Activated CD4-positive, alpha-beta memory T cell treated with anti-CD3 and anti-CD28 coated beads for 36 hours (primary cell): ENCODE measurements at regions of chr1 and their contacts with region 1.

Region 1: DNA sequence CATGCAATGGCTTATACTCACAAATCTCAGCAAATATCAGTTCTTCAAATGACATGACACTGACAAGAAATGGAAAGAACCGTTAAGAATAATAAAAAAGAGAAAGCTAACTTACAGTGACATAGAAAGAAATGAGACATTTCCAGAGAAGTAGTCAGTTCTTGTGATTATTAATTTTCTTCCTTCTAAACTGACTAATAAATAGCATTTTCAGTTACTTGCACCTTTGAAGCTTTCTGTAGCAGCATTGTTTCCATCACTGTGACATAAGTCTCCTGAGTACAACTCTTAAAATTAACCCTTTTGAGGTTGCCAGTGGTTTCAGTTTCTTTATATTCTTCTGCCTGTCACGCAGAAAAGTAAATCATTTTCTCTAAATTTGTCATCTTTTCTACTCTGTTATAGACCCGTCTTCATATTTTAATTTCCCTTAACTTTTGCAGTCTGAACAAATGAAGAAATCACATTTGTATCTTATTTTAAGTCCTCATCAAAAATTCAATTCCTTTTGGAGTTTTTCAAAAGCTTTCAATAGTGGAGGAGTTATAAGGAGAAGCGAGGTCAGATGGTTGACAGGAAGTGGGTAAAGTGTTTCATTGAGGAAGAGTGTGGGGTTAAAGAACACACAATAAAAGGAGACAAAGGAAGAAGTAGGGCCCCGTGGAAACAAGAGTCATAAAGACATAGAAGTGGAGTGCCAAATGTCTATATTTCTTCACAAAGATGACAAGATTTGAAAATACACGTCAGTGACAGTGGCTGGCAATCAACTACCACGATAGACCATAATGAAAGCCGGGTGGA is 57.9 kb upstream of the S1PR1 start:
- DNase-seq: peak; percentile 58
- H3K4me3 Mint-ChIP-seq: peak overlapping the region; percentile 71
- H3K27ac Mint-ChIP-seq: peak overlapping the region; percentile 100
- H3K4me1 Mint-ChIP-seq: peaks cover 79% of the 10 kb centered on the region
- H3K27me3 Mint-ChIP-seq: no peaks in the 10 kb centered on the region

Region 2: GRCh38 chr1:100895540-100896483 is 283.1 kb before region 1 on chr1 and contains the start of gene SLC30A7:
- CTCF ChIA-PET with region 1: no interaction called
- POLR2A ChIA-PET with region 1: no interaction called
- intact Hi-C with region 1: loop called (anchors 1 kb)
- DNase-seq: peak; percentile 98
- H3K4me3 Mint-ChIP-seq: peak within 1 kb of the TSS; percentile 99
- H3K27ac Mint-ChIP-seq: peak within 1 kb of the TSS; percentile 100
- H3K4me1 Mint-ChIP-seq: peaks cover 40% of the 10 kb centered on the region
- H3K27me3 Mint-ChIP-seq: no peaks in the 10 kb centered on the region
- total RNA-seq, gene SLC30A7: 40.0 to 43.4 TPM

Region 3: GRCh38 chr1:100941098-100941527 is 237.8 kb before region 1 on chr1:
- CTCF ChIA-PET with region 1: no interaction called
- POLR2A ChIA-PET with region 1: no interaction called
- intact Hi-C with region 1: loop called (anchors 5 kb)
- DNase-seq: peak; percentile 67
- H3K4me3 Mint-ChIP-seq: peak overlapping the region; percentile 77
- H3K27ac Mint-ChIP-seq: peak overlapping the region; percentile 92
- H3K4me1 Mint-ChIP-seq: peaks cover 39% of the 10 kb centered on the region
- H3K27me3 Mint-ChIP-seq: peaks cover 3% of the 10 kb centered on the region

Region 4: DNA sequence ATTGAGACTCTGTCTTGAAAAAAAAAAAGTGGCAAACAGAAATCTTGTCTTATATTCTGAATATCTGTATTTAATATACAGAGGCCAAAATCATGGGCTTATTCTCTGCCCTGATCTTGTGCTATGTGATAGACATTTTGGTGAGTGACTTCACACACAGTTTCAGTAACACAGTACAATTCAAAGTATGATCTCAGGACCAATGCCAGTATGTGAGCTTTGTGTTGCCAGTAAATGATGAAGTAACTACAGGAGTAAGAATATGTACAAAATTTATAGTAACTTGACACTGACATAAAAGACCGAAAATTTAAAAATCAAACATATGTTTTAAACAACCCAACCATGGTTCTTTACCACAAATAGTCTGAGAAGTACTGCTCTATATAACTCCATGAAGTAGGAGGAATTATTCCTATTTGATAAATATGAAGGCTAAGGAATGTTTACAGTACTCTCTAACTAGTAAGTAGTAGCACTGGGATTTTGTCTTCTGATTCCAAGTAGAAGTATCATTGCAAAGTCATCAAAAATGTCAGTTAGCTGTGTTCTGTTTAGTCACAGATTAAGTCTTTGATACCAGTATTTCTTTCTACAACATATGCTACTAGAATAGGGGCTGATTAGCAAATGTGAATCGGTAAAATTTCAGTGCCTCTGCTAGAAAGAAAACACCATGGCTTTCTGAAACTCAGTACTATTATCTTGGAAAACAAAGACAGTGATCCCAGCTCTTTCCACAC is 178.6 kb before region 1 on chr1:
- CTCF ChIA-PET with region 1: no interaction called
- POLR2A ChIA-PET with region 1: no interaction called
- intact Hi-C with region 1: no loop called
- DNase-seq: no peak
- H3K4me3 Mint-ChIP-seq: no peak overlapping the region
- H3K27ac Mint-ChIP-seq: no peak overlapping the region
- H3K4me1 Mint-ChIP-seq: peaks cover 40% of the 10 kb centered on the region
- H3K27me3 Mint-ChIP-seq: no peaks in the 10 kb centered on the region

Region 5: DNA sequence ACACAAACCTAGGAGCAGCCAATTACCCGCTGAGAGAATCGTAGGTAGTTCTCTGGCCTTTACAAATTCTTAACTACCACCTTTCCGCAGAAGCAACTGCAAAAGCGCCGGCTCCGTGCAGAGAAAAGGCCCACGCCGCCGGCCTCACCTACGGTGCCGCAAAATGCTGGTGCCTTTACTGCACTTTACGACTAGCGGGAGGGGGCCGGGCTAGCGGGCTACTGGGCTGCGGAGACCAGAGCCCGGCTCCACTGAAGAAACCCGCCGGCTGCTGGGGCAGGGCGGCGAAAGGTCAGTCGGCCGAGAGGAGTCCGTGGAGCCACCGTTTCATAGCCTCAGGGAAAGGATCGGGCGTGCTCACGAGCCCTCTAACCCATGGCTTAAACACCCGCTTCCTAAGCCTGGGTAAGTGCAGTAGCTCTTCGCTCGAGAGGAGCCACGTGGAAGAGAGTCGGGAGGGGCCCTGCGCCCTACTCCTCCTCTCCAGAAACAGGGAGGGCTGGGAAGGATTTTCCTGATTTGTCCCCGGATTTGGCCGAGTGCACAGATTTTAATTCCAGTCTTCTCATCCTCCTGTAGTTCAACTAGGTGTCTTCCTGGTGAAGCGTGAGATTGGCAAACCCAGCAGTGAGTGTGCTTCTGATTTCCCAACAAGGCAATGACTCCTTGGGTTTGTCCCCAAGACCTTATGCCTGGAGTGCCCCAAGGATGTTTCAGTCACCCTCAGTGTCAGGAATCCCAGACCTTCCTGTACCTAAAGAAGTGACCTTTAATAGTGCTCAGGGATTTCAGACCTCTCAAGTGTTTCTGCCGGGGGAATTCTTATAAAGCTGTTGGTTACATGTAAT is 153.0 kb before region 1 on chr1 and contains the start of gene DPH5:
- CTCF ChIA-PET with region 1: no interaction called
- POLR2A ChIA-PET with region 1: interaction called, 3 read pairs
- intact Hi-C with region 1: loop called (anchors 2 kb)
- DNase-seq: peak; percentile 94
- H3K4me3 Mint-ChIP-seq: peak within 1 kb of the TSS; percentile 89
- H3K27ac Mint-ChIP-seq: peak within 1 kb of the TSS; percentile 89
- H3K4me1 Mint-ChIP-seq: peaks cover 54% of the 10 kb centered on the region
- H3K27me3 Mint-ChIP-seq: no peaks in the 10 kb centered on the region
- total RNA-seq, gene DPH5: 56.5 to 59.6 TPM

Region 6: GRCh38 chr1:101122452-101123166 is 56.3 kb before region 1 on chr1:
- CTCF ChIA-PET with region 1: no interaction called
- POLR2A ChIA-PET with region 1: interaction called, 4 read pairs
- intact Hi-C with region 1: loop called (anchors 1 kb)
- DNase-seq: no peak
- H3K4me3 Mint-ChIP-seq: no peak overlapping the region
- H3K27ac Mint-ChIP-seq: peak overlapping the region; percentile 1
- H3K4me1 Mint-ChIP-seq: peaks cover 43% of the 10 kb centered on the region
- H3K27me3 Mint-ChIP-seq: no peaks in the 10 kb centered on the region

Region 7: GRCh38 chr1:101203820-101204540 is 25.1 kb after region 1 on chr1:
- CTCF ChIA-PET with region 1: interaction called, 17 read pairs
- POLR2A ChIA-PET with region 1: interaction called, 78 read pairs
- intact Hi-C with region 1: loop called (anchors 1 kb)
- DNase-seq: no peak
- H3K4me3 Mint-ChIP-seq: no peak overlapping the region
- H3K27ac Mint-ChIP-seq: no peak overlapping the region
- H3K4me1 Mint-ChIP-seq: peaks cover 37% of the 10 kb centered on the region
- H3K27me3 Mint-ChIP-seq: no peaks in the 10 kb centered on the region